Body of pancreas (tissue), 4 donors: ENCODE measurements at regions of chr3 and their contacts with region 1.

Region 1: DNA sequence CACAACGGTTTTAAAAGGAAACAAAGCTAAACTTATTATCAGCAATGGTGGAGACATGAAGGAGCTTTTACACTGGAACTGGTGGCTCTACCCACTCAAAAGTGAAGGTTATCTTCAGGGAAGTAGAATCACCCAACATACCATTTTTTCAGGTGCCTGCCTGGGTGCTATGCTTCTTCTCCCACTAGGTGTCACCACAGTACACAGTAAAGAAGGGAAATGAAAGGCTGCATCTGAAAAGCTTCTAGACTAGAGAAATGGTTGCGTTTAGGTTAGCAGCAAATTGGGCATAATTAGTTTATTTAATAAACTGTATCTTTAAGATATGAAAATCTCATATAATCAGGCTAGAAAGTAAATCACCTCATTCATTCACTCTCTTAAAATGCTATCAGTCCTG is 47.0 kb upstream of the SELENOK start:
- DNase-seq: peak; percentile 42 to 62 (median 52)
- ATAC-seq: peak; percentile 60
- H3K4me3 ChIP-seq: no peak overlapping the region
- H3K27ac ChIP-seq: no peak overlapping the region
- H3K4me1 ChIP-seq: no peaks in the 10 kb centered on the region
- H3K27me3 ChIP-seq: peaks cover 0 to 5% of the 10 kb centered on the region in 2 donors
- CTCF ChIP-seq: peak; percentile 53 to 90 (median 79)
- POLR2A ChIP-seq: no peak

Region 2: GRCh38 chr3:53845103-53845880 is 93.4 kb before region 1 on chr3:
- intact Hi-C with region 1: no loop called
- DNase-seq: peak; percentile 74 to 81 (median 79)
- ATAC-seq: peak; percentile 39
- H3K4me3 ChIP-seq: peak overlapping the region; percentile 31 to 41
- H3K27ac ChIP-seq: peak overlapping the region; percentile 89 to 99 (median 98)
- H3K4me1 ChIP-seq: peaks cover 63% of the 10 kb centered on the region
- H3K27me3 ChIP-seq: no peaks in the 10 kb centered on the region
- CTCF ChIP-seq: peak in 5 of 7 experiments; percentile 9 to 52 (median 39)
- POLR2A ChIP-seq: peak in 2 of 3 donors; percentile 69 to 72

Region 3: GRCh38 chr3:54374214-54374855 is 435.7 kb after region 1 on chr3:
- intact Hi-C with region 1: loop called (anchors 10 kb)
- DNase-seq: peak; percentile 31 to 62 (median 52)
- ATAC-seq: no peak
- H3K4me3 ChIP-seq: no peak overlapping the region
- H3K27ac ChIP-seq: no peak overlapping the region
- H3K4me1 ChIP-seq: no peaks in the 10 kb centered on the region
- H3K27me3 ChIP-seq: no peaks in the 10 kb centered on the region
- CTCF ChIP-seq: peak; percentile 29 to 78 (median 67)
- POLR2A ChIP-seq: no peak